Activated B cell treated with CpG ODN at 0.5 μM for 24 hours (primary cell): ENCODE measurements at regions of chr5 and their contacts with region 1.

Region 1: GRCh38 chr5:55172051-55172899 is 702 bp downstream of the CDC20B start:
- DNase-seq: no peak
- ATAC-seq: peak; percentile 53
- H3K4me3 Mint-ChIP-seq: peak overlapping the region; percentile 88
- H3K27ac Mint-ChIP-seq: no peak overlapping the region
- H3K4me1 Mint-ChIP-seq: peaks cover 33% of the 10 kb centered on the region
- H3K27me3 Mint-ChIP-seq: peaks cover 51% of the 10 kb centered on the region
- CTCF ChIP-seq: peak; percentile 88

Region 2: DNA sequence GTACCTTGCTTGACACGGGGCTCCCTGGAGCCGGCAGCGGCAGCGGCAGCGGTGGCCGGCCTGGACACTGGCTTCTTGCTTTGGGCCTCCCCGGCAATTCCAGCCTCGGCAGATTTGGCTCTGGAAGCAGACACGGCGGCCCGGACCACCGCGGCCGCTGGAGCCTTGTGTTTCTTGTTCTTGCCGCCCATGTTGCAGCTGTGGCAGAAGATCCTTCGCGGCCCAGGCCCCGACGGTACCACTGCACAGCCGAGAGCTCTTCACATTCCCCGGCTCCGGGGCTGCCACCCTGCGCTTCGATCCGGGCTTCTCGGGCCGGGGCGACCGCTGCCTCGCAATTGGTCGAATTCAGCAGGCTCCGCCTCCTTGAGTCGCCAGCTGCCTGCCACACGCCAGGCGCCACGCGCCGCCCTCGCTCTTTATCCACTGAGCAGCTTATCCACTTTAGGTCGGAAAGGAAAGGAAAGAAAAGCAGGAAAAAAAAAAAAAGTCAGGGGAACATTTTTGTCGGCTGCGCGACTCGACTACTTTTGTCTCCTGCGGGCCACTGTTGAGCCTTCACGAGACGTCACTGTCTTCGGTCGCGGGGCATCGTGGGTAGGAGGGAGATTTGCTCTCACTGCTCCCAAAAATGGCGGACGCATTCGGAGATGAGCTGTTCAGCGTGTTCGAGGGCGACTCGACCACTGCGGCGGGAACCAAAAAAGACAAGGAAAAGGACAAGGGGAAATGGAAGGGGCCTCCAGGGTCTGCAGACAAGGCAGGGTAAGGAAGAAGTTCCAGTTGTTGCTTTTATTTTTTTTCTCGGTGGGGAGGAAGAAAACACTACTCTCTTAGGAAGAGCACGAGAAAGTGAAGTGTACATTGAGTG is 135.3 kb after region 1 on chr5 and contains the starts of genes DHX29 and MTREX:
- CTCF ChIA-PET with region 1: interaction called, 4 read pairs
- POLR2A ChIA-PET with region 1: no interaction called
- intact Hi-C with region 1: loop called (anchors 1 kb)
- DNase-seq: peak; percentile 82
- ATAC-seq: peak; percentile 92
- H3K4me3 Mint-ChIP-seq: no peak within 1 kb of the TSS
- H3K27ac Mint-ChIP-seq: no peak within 1 kb of the TSS
- H3K4me1 Mint-ChIP-seq: peaks cover 31% of the 10 kb centered on the region
- H3K27me3 Mint-ChIP-seq: no peaks in the 10 kb centered on the region
- CTCF ChIP-seq: no peak
- total RNA-seq, gene DHX29: 17.4 TPM in 2 replicates
- total RNA-seq, gene MTREX: 98.8 and 106 TPM in 2 replicates

Region 3: GRCh38 chr5:55344392-55344992 is 172.2 kb after region 1 on chr5:
- CTCF ChIA-PET with region 1: no interaction called
- POLR2A ChIA-PET with region 1: no interaction called
- intact Hi-C with region 1: loop called (anchors 1 kb)
- DNase-seq: no peak
- ATAC-seq: peak; percentile 52
- H3K4me3 Mint-ChIP-seq: no peak overlapping the region
- H3K27ac Mint-ChIP-seq: peak overlapping the region; percentile 41
- H3K4me1 Mint-ChIP-seq: peaks cover 3% of the 10 kb centered on the region
- H3K27me3 Mint-ChIP-seq: no peaks in the 10 kb centered on the region
- CTCF ChIP-seq: no peak

Region 4: DNA sequence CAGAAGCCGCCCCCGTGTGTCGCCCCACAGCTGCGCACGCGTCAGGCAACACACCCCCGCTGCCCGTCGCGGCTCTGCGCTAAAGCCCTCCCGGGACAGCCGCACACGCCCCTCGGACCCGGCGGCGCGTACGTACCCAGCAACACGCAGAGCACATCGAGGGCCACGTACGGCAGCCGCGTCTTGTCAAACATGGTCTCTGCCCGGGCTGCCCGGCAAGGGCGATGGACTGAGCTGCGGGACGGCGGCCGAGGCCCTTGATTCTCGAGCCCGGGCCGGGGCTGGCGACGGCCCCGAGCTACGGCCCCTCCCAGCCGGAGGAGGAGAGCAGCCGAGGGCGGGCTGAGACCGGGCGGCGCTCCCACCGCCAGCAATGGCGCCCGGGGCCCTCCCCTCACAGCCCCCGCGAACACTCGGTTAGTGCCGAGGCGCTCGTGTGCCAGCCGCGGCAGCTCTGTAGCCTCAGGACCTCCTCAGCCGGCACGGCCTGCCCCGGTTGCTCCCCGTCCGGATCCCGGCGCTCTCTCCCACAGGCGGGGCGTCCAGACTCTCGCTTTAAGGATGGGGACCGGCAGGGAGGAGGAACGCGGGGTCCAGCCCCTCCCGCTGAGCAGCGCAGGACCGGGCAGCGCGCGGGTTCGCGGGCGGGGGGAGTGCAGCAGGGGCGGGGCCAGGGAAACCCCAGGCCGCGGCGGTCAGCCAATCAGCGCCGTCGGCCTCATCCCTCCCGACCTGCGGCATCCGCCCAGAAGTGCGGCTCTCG is 362.3 kb after region 1 on chr5 and contains the start of gene PLPP1:
- CTCF ChIA-PET with region 1: no interaction called
- POLR2A ChIA-PET with region 1: no interaction called
- intact Hi-C with region 1: loop called (anchors 1 kb)
- DNase-seq: peak; percentile 89
- ATAC-seq: peak; percentile 79
- H3K4me3 Mint-ChIP-seq: peak within 1 kb of the TSS; percentile 90
- H3K27ac Mint-ChIP-seq: peak within 1 kb of the TSS; percentile 87
- H3K4me1 Mint-ChIP-seq: peaks cover 25% of the 10 kb centered on the region
- H3K27me3 Mint-ChIP-seq: no peaks in the 10 kb centered on the region
- CTCF ChIP-seq: no peak
- total RNA-seq, gene PLPP1: 10.3 and 12.0 TPM in 2 replicates

Region 5: DNA sequence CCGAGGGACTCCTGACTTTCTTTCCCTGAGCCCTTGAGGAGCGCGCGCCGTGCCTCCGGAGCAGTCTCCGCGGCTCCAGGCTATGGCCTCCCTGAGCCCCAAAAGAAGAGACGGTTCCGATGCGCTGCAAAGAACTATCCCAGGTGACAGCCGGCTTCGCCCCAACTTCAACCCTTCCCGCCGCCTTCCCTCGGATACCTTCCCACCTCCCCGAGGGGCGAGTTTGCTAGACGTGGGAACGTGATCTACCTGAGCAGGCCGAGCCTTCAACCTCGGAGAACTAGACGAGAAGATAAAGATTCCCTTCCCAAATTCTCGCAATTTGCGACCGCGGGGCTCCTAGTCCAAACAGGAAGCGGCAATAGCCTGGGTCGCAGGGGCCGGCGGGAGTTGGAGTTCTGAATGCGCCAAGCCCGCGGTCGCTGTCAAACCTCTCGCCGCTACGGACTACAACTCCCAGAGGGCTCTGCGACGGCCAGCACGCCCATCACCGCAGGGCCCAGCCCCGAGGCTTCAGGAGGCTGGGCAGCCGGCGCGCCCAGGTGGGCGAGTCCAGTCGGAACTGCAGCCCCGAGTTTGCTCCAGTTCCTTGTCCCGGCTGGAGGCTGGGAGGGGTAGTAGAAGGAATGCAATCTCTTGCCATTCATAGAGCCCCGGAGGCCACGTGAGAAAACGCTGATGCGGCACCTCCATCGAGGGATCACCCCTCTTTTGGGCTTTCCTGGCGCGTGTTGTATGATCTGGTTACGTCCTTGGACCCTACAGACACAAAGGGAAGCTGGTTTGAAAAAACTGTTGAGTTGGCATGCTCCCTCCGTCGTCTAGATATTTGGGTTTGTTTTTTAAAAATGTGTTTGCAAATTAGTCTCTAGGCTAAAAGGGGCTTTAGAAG is 539.9 kb after region 1 on chr5 and contains the start of gene SLC38A9:
- CTCF ChIA-PET with region 1: no interaction called
- POLR2A ChIA-PET with region 1: no interaction called
- intact Hi-C with region 1: loop called (anchors 1 kb)
- DNase-seq: peak; percentile 91
- ATAC-seq: peak; percentile 100
- H3K4me3 Mint-ChIP-seq: peak within 1 kb of the TSS; percentile 100
- H3K27ac Mint-ChIP-seq: peak within 1 kb of the TSS; percentile 92
- H3K4me1 Mint-ChIP-seq: peaks cover 17% of the 10 kb centered on the region
- H3K27me3 Mint-ChIP-seq: no peaks in the 10 kb centered on the region
- CTCF ChIP-seq: no peak
- total RNA-seq, gene SLC38A9: 26.6 and 29.9 TPM in 2 replicates

Region 6: GRCh38 chr5:55994574-55995333 is 822.5 kb after region 1 on chr5 and contains the start of gene IL6ST:
- CTCF ChIA-PET with region 1: no interaction called
- POLR2A ChIA-PET with region 1: no interaction called
- intact Hi-C with region 1: loop called (anchors 2 kb)
- DNase-seq: peak; percentile 95
- ATAC-seq: peak; percentile 92
- H3K4me3 Mint-ChIP-seq: peak within 1 kb of the TSS; percentile 96
- H3K27ac Mint-ChIP-seq: peak within 1 kb of the TSS; percentile 95
- H3K4me1 Mint-ChIP-seq: peaks cover 38% of the 10 kb centered on the region
- H3K27me3 Mint-ChIP-seq: peaks cover 5% of the 10 kb centered on the region
- CTCF ChIP-seq: no peak
- total RNA-seq, gene IL6ST: 39.8 and 48.3 TPM in 2 replicates

Region 7: GRCh38 chr5:56909294-56910209 is 1737.3 kb after region 1 on chr5 and contains the start of gene SETD9:
- CTCF ChIA-PET with region 1: no interaction called
- POLR2A ChIA-PET with region 1: no interaction called
- intact Hi-C with region 1: loop called (anchors 10 kb)
- DNase-seq: peak; percentile 93
- ATAC-seq: peak; percentile 85
- H3K4me3 Mint-ChIP-seq: peak within 1 kb of the TSS; percentile 96
- H3K27ac Mint-ChIP-seq: peak within 1 kb of the TSS; percentile 96
- H3K4me1 Mint-ChIP-seq: peaks cover 20% of the 10 kb centered on the region
- H3K27me3 Mint-ChIP-seq: no peaks in the 10 kb centered on the region
- CTCF ChIP-seq: no peak
- total RNA-seq, gene SETD9: 3.4 and 6.2 TPM in 2 replicates